ENCODE measurements at regions of chr9 and their contacts with region 1.

Region 1: DNA sequence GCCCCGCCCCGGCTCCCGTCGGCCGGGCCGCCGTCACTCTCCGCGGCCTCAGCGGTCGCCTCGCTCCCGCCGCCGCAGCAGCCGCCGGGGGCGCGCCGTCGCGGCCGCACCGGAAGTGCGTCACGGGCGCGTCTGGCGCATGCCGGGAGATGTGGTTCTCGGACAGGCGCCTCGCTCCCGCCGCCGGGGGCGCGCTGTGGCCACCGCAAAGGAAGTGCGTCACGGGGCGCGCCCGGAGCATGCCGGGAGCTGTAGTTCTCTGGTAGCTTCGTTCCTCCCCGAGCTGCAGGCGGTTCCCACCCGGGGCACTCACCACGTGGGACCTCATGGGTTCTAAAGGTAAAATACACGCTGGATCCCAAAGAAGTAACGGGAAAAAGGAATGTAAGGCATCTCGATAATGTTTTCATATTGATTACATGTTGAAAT is at the start of gene UBAC1:
- DNase-seq: peak; percentile 98
- ATAC-seq: peak; percentile 92
- H3K4me3 Mint-ChIP-seq: peak within 1 kb of the TSS; percentile 87
- H3K27ac Mint-ChIP-seq: peak within 1 kb of the TSS; percentile 73
- H3K4me1 Mint-ChIP-seq: peaks cover 32% of the 10 kb centered on the region
- H3K27me3 Mint-ChIP-seq: no peaks in the 10 kb centered on the region
- total RNA-seq, gene UBAC1: 41.7 to 42.8 TPM

Region 2: DNA sequence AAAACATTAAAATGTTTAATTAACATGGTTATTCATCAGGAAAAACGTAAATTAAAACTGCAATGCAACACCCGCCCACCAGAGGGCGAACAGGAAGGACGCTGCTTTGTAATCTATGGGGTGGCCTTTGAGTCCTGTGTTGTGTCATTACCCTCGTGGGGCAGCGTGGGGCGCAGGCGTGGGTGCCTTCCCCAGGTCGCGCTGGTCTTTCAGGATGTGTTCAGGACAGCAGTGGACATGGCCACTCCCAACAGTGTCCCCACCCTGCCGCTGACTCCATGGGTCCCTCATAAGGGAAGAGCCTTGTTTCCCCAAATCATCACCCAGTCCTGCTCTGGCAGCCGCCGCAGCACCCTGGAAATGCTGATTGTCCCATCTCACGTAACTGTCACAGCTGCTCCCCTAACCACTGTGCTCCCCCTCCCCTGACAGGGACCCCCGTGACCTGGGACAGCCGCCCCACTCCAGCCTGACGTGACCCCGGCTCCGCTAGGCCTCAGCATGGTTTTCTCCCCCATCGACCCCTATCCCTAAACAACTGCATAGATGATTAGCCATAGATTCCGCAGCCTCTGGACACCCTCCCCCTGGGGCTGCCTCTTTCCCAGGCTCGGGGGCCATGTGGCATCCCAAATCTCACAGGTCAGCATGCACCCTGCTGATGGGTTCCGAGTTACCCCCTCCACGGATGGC is 358.4 kb before region 1 on chr9:
- CTCF ChIA-PET with region 1: no interaction called
- POLR2A ChIA-PET with region 1: no interaction called
- intact Hi-C with region 1: loop called in 1 of 2 experiments (anchors 5 kb)
- DNase-seq: peak; percentile 75
- ATAC-seq: peak; percentile 58
- H3K4me3 Mint-ChIP-seq: no peak overlapping the region
- H3K27ac Mint-ChIP-seq: no peak overlapping the region
- H3K4me1 Mint-ChIP-seq: no peaks in the 10 kb centered on the region
- H3K27me3 Mint-ChIP-seq: peaks cover 10% of the 10 kb centered on the region

Region 3: GRCh38 chr9:135864447-135865049 is 96.7 kb before region 1 on chr9:
- CTCF ChIA-PET with region 1: interaction called, 3 read pairs
- POLR2A ChIA-PET with region 1: no interaction called
- intact Hi-C with region 1: loop called (anchors 1 to 2 kb)
- DNase-seq: peak; percentile 84
- ATAC-seq: peak; percentile 58
- H3K4me3 Mint-ChIP-seq: no peak overlapping the region
- H3K27ac Mint-ChIP-seq: no peak overlapping the region
- H3K4me1 Mint-ChIP-seq: peaks cover 31% of the 10 kb centered on the region
- H3K27me3 Mint-ChIP-seq: no peaks in the 10 kb centered on the region

Region 4: DNA sequence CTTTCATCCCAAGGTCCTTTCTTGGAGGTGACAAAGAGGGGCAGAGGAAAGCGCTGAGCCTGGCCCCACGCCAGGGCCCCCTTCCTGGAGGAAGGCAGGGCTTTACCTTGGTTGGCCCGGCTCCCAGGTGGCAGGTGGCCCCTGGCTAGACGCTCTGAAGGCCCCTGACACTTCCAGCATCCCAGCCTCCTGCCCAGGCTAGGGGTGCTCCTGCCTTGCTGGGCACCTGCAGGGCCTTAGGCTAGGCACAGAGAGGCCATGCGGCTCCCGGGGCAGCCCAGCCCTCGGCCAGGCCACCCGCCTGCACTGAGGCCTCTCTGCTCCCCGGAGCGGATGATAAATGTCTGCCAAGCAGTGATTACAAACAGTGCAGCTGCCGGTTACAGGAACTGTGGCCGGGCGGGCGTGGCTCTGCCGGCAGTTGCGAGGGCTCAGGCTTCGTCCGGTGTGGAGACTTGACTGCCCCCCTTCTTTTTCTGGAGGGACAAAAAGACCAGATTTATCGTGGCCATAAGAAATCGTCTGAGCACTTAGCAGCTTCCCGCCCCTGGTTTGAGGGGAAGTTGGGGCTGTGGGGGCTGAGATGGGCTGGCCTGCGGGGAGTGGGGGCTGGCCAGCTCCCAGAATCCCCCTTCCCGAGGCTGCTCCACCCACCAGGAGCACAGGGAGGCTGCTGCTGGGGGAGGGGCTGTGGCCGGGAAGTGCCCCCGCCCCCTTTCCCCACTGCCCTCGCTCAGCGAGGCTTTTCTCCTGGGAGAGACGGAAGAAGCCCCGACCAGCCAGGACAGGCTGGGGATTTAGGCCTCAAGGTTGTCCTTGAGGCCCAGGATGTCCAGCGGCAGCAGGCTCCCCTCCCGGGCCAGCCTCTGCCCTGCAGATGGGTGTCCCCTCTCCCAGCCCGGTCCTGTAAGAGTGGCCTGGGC is 31.5 kb after region 1 on chr9:
- CTCF ChIA-PET with region 1: no interaction called
- POLR2A ChIA-PET with region 1: interaction called, 4 read pairs
- intact Hi-C with region 1: loop called in 1 of 2 experiments (anchors 1 kb)
- DNase-seq: peak; percentile 68
- ATAC-seq: peak; percentile 71
- H3K4me3 Mint-ChIP-seq: no peak overlapping the region
- H3K27ac Mint-ChIP-seq: no peak overlapping the region
- H3K4me1 Mint-ChIP-seq: peaks cover 17% of the 10 kb centered on the region
- H3K27me3 Mint-ChIP-seq: no peaks in the 10 kb centered on the region

Region 5: GRCh38 chr9:136245219-136246150 is 284.2 kb after region 1 on chr9 and contains the start of gene QSOX2:
- CTCF ChIA-PET with region 1: no interaction called
- POLR2A ChIA-PET with region 1: no interaction called
- intact Hi-C with region 1: loop called in 1 of 2 experiments (anchors 1 kb)
- DNase-seq: peak; percentile 94
- ATAC-seq: peak; percentile 61
- H3K4me3 Mint-ChIP-seq: peak within 1 kb of the TSS; percentile 85
- H3K27ac Mint-ChIP-seq: peak within 1 kb of the TSS; percentile 95
- H3K4me1 Mint-ChIP-seq: peaks cover 28% of the 10 kb centered on the region
- H3K27me3 Mint-ChIP-seq: no peaks in the 10 kb centered on the region
- total RNA-seq, gene QSOX2: 18.1 to 21.2 TPM

Region 6: DNA sequence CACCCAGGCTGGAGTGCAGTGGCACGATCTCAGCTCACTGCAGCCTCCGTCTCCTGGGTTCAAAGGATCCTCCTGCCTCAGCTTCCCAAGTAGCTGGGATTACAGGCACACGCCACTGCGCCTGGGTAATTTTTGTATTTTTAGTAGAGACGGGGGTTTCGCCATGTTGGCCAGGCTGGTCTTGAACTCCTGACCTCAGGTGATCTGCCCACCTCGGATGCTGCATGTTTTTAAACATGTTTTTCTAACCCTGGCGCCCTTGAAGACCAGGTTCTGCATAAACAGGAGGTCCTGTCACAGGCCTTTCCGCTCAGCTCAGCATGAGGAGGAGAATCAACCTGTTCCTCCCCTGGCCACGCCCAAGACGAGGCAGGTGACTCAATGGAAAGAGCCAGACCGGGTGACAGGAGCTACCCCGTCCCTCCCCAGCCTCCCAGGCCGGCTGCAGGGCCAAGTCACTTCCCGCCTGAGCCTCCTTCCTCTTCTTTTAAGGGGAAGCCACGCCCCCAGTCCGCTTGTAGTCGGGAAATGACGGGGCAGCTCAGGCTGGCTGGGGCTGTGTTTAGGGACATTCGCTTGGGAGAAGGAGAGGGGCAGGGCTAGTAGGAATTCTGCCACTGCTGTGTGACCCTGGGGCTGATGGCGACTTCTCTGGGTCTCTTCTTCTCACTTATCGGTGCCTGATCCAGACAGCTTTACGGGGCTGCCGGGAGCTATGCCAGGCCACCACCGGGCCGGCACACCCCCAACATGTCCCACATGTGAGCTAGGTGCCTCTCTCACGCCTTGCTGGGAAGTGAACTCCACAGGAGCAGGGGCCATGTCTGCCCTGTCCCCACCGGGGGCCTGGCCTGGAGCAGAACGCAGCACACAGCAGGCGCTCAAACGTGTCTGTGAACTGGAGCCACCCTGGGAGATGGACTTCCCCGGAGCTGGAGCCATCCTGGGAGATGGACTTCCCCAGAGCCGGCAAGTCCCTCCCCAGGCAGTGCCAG is 578.4 kb after region 1 on chr9:
- CTCF ChIA-PET with region 1: no interaction called
- POLR2A ChIA-PET with region 1: no interaction called
- intact Hi-C with region 1: loop called in 1 of 2 experiments (anchors 1 kb)
- DNase-seq: peak; percentile 99
- ATAC-seq: peak; percentile 81
- H3K4me3 Mint-ChIP-seq: peak overlapping the region; percentile 65
- H3K27ac Mint-ChIP-seq: peak overlapping the region; percentile 99
- H3K4me1 Mint-ChIP-seq: peaks cover 74% of the 10 kb centered on the region
- H3K27me3 Mint-ChIP-seq: no peaks in the 10 kb centered on the region

Measured in activated CD4-positive, alpha-beta T cell treated with anti-CD3 and anti-CD28 coated beads for 36 hours (primary cell).